ENCODE measurements at regions of chr12 and their contacts with region 1.

Region 1: GRCh38 chr12:55637467-55637866 is 775 bp downstream of the OR10P1 start:
- DNase-seq: peak in 22 of 35 experiments; percentile 4 to 45 (median 16)
- ATAC-seq: peak; percentile 63 to 90 (median 86)
- H3K4me3 ChIP-seq: no peak overlapping the region
- H3K4me3 Mint-ChIP-seq: peak overlapping the region in 1 of 3 donors; percentile 15
- H3K27ac ChIP-seq: no peak overlapping the region
- H3K27ac Mint-ChIP-seq: peak overlapping the region; percentile 41 to 74
- H3K4me1 ChIP-seq: peaks cover 0 to 14% of the 10 kb centered on the region in 2 experiments
- H3K4me1 Mint-ChIP-seq: peaks cover 14 to 20% (median 20%) of the 10 kb centered on the region in 3 donors
- H3K27me3 ChIP-seq: peaks cover 0 to 3% of the 10 kb centered on the region in 2 experiments
- H3K27me3 Mint-ChIP-seq: peaks cover 0 to 10% of the 10 kb centered on the region in 2 donors

Region 2: GRCh38 chr12:55673638-55674037 is 36.2 kb after region 1 on chr12:
- CTCF ChIA-PET with region 1: no interaction called
- POLR2A ChIA-PET with region 1: interaction called in 1 of 2 experiments, 15 read pairs
- DNase-seq: no peak
- ATAC-seq: no peak
- H3K4me3 ChIP-seq: no peak overlapping the region
- H3K4me3 Mint-ChIP-seq: no peak overlapping the region
- H3K27ac ChIP-seq: no peak overlapping the region
- H3K27ac Mint-ChIP-seq: peak overlapping the region in 1 of 2 donors; percentile 44
- H3K4me1 ChIP-seq: no peaks in the 10 kb centered on the region
- H3K4me1 Mint-ChIP-seq: peaks cover 0 to 3% (median 0%) of the 10 kb centered on the region in 3 donors
- H3K27me3 ChIP-seq: peaks cover 0 to 5% of the 10 kb centered on the region in 2 experiments
- H3K27me3 Mint-ChIP-seq: peaks cover 12 to 15% of the 10 kb centered on the region in 2 donors

Measured in T-cell (primary cell).